Ovary (tissue), 10 donors: ENCODE measurements at regions of chr17 and their contacts with region 1.

Region 1: DNA sequence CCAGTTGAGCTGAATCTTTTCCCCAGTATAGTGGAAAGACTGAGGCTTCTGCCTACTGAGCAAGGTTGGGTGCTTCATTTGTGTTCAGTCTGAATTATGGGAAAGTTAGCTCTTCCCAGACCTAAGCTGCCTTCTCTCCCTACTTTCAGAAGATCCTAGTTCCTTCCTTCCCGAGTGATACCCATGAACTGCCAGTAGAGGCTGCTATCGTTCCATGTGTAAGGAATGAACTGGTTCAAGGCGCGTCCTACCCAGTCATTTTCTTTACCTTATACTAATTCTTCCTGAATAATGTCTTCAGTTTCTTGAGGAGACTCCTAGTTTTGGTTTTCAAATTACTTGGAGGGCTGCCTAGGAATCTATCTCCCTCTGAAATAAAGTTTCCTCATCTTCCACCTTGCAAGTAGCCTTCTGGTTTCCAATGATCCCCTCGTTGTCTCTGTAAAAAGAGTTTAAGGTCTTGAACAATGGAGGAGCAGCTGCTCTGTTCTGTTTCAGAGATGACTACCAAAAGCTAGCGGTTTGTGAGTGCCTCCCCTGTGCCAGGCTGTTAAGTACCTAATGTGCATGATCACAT is 934 bp upstream of the AOC2 start:
- DNase-seq: peak in 1 of 5 donors; percentile 47
- H3K4me3 ChIP-seq: no peak overlapping the region
- H3K27ac ChIP-seq: no peak overlapping the region
- H3K4me1 ChIP-seq: no peaks in the 10 kb centered on the region
- H3K27me3 ChIP-seq: no peaks in the 10 kb centered on the region
- CTCF ChIP-seq: peak; percentile 64 to 88 (median 87)
- EP300 ChIP-seq: no peak
- POLR2A ChIP-seq: no peak

Region 2: DNA sequence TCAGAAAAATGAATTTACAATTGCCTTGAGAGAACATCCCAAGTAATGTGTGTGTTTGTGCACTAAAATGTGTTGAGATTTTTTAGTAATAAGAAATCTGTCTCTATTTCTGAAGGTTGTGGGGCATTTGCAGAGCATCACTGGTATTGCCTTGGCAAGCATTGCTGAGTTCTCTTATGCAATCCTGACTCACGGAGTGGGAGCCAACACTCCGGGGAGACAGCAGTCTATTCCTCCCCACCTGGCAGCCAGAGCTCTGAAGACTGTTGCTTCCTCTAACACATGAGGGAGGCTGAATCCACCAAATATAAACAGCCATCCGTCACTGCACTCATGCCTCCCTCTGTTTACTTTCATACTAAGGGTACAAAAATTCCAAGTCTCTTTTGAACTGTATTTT is 34.2 kb before region 1 on chr17:
- intact Hi-C with region 1: no loop called
- DNase-seq: peak; percentile 60 to 76 (median 65)
- H3K4me3 ChIP-seq: no peak overlapping the region
- H3K27ac ChIP-seq: peak overlapping the region in 1 of 2 donors; percentile 24
- H3K4me1 ChIP-seq: no peaks in the 10 kb centered on the region
- H3K27me3 ChIP-seq: no peaks in the 10 kb centered on the region
- CTCF ChIP-seq: no peak
- EP300 ChIP-seq: no peak
- POLR2A ChIP-seq: no peak

Region 3: DNA sequence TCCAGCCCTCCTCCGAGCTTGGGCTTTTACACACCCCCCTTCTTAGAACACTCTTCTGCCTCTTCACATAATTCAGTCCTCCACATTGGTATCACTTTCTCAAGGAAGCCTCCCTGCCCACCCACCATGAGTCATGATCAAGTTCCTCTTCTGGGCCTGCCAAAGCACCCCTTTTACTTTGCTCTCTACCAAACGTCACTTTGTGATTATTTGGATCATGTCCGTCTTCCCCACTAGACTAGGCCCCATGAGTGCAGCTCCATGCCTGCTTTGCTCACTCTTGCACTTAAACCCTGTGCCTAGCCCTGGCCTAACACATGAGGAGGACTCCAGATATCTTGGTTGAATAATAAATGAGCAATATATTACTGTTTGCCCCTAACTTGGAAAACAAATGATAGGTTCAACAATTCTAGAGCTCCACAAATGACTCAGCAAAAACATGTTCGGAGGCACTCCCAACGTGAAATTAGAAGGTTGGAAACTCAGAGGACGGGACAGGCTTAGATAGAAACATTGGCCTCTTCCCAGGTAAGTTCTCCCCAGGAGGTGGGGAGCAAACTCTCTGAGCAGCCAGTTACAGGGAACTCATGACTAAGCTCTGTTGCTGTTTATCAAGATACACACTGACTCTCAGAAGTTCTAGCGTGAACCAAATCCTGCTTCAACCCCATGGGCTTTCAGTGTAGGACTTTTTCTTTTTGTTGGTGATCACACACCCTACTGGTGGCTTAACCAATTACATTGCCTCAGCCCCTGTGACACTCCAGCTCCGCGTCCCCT is 85.5 kb after region 1 on chr17:
- intact Hi-C with region 1: loop called in 1 of 4 experiments (anchors 5 kb)
- DNase-seq: peak in 3 of 5 donors; percentile 9 to 42 (median 22)
- H3K4me3 ChIP-seq: no peak overlapping the region
- H3K27ac ChIP-seq: peak overlapping the region in 1 of 2 donors; percentile 32
- H3K4me1 ChIP-seq: peaks cover 3% of the 10 kb centered on the region
- H3K27me3 ChIP-seq: no peaks in the 10 kb centered on the region
- CTCF ChIP-seq: peak in 2 of 3 donors; percentile 45 to 52
- EP300 ChIP-seq: no peak
- POLR2A ChIP-seq: no peak

Region 4: GRCh38 chr17:42937712-42938596 is 94.5 kb after region 1 on chr17:
- intact Hi-C with region 1: loop called (anchors 5 kb)
- DNase-seq: peak; percentile 22 to 57 (median 48)
- H3K4me3 ChIP-seq: no peak overlapping the region
- H3K27ac ChIP-seq: no peak overlapping the region
- H3K4me1 ChIP-seq: no peaks in the 10 kb centered on the region
- H3K27me3 ChIP-seq: no peaks in the 10 kb centered on the region
- CTCF ChIP-seq: peak; percentile 23 to 60 (median 42)
- EP300 ChIP-seq: no peak
- POLR2A ChIP-seq: no peak

Region 5: GRCh38 chr17:42997984-42998938 is 154.8 kb after region 1 on chr17 and contains the start of gene RPL27:
- intact Hi-C with region 1: loop called in 1 of 4 experiments (anchors 10 kb)
- DNase-seq: peak; percentile 97 to 99 (median 98)
- H3K4me3 ChIP-seq: peak within 1 kb of the TSS; percentile 65
- H3K27ac ChIP-seq: peak within 1 kb of the TSS; percentile 69 to 80
- H3K4me1 ChIP-seq: peaks cover 4% of the 10 kb centered on the region
- H3K27me3 ChIP-seq: no peaks in the 10 kb centered on the region
- CTCF ChIP-seq: peak; percentile 71 to 95 (median 90)
- EP300 ChIP-seq: no peak
- POLR2A ChIP-seq: peak; percentile 89
- total RNA-seq, gene RPL27: 1,130 to 2,473 (median 1,529) TPM